ENCODE measurements at regions of chr3 and their contacts with region 1.

Region 1: GRCh38 chr3:187679638-187680396 is 9.6 kb upstream of the SST start:
- DNase-seq: peak; percentile 57 to 71 (median 61)
- H3K4me3 ChIP-seq: no peak overlapping the region
- H3K27ac ChIP-seq: no peak overlapping the region
- H3K4me1 ChIP-seq: no peaks in the 10 kb centered on the region
- H3K27me3 ChIP-seq: peaks cover 2 to 10% (median 4%) of the 10 kb centered on the region in 5 experiments

Region 2: DNA sequence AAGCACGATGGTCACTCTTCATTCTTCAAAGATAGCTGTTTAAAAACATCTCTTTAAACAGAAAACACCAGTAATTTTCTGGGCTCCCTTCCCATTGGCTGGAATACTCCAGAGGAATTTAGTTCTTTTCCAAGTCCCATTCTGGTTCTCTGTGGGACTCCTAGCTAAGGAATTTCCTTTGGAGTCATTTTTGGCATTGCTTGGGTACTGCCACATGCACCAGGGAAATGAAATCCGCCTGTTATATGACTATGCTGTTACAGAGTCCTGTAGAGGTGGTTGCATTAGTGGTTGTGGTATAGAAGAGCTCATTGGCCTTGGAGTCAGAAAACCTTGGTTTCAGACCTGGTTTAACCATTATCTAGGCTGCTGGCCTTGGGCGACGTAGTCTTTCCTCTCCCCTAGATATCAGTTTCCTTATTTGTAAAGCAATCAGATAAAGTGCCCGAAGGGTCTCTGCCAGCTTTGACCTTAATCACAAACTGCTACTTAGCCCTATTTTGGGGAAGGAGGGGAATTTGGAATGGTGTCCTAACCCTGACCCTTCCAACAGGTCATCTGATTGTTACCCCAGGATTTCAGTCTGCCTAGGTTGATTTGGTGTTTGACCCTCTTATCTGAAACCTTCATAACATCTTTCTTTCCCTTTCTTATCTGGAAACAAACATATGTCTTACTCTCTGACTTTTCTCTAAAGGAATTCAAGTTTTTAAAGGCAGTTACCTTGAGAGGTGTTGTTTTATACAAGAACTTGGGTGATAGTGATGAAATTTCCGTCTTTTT is 469.1 kb before region 1 on chr3:
- CTCF ChIA-PET with region 1: interaction called, 11 read pairs
- POLR2A ChIA-PET with region 1: no interaction called
- DNase-seq: peak in 1 of 3 donors; percentile 17
- H3K4me3 ChIP-seq: no peak overlapping the region
- H3K27ac ChIP-seq: no peak overlapping the region
- H3K4me1 ChIP-seq: no peaks in the 10 kb centered on the region
- H3K27me3 ChIP-seq: peaks cover 0 to 2% (median 0%) of the 10 kb centered on the region in 5 experiments

Region 3: DNA sequence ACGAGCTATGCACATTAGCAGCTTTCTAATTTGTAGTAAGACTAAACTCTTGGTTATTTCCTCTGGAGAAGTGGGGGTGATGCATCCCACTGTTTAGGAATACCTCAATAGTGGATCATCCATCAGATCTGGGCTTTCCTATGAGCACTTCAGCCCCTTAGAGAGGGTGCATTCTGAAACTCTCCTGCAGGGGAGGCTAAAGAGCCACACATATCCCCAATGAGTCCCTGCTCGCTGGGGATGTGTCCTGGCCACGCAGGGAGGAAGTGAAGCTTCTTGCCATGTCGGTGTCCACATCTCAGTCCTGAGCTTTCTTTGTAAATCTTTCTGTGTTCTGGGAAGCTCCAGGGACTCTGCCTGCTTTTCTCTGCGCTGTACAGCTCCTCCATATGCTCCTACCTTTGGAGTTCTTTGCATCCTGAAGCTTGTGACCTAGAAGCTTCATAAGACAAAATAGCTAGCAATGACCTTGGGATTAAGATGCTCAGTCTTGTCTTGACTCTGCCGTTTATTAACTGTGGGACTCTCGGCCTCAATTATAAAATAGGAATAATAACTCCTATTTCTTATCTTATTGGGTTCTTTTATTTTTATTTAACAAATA is 360.0 kb before region 1 on chr3:
- CTCF ChIA-PET with region 1: interaction called, 376 read pairs
- POLR2A ChIA-PET with region 1: no interaction called
- DNase-seq: peak; percentile 66 to 84 (median 76)
- H3K4me3 ChIP-seq: no peak overlapping the region
- H3K27ac ChIP-seq: no peak overlapping the region
- H3K4me1 ChIP-seq: peaks cover 0 to 7% (median 3%) of the 10 kb centered on the region in 4 experiments
- H3K27me3 ChIP-seq: peaks cover 2 to 10% (median 8%) of the 10 kb centered on the region in 5 experiments

Region 4: GRCh38 chr3:187567661-187568121 is 112.1 kb before region 1 on chr3:
- CTCF ChIA-PET with region 1: no interaction called
- POLR2A ChIA-PET with region 1: no interaction called
- DNase-seq: peak in 2 of 3 donors; percentile 14 to 63
- H3K4me3 ChIP-seq: no peak overlapping the region
- H3K27ac ChIP-seq: no peak overlapping the region
- H3K4me1 ChIP-seq: peaks cover 0 to 6% (median 0%) of the 10 kb centered on the region in 4 experiments
- H3K27me3 ChIP-seq: peaks cover 0 to 4% (median 0%) of the 10 kb centered on the region in 5 experiments

Region 5: GRCh38 chr3:187616307-187616972 is 63.4 kb before region 1 on chr3:
- CTCF ChIA-PET with region 1: interaction called, 15 read pairs
- POLR2A ChIA-PET with region 1: no interaction called
- DNase-seq: peak; percentile 55 to 82 (median 78)
- H3K4me3 ChIP-seq: no peak overlapping the region
- H3K27ac ChIP-seq: no peak overlapping the region
- H3K4me1 ChIP-seq: no peaks in the 10 kb centered on the region
- H3K27me3 ChIP-seq: peaks cover 0 to 2% (median 0%) of the 10 kb centered on the region in 5 experiments

Region 6: GRCh38 chr3:187689984-187690383 is 10.2 kb after region 1 on chr3:
- CTCF ChIA-PET with region 1: interaction called, 15 read pairs
- POLR2A ChIA-PET with region 1: no interaction called
- DNase-seq: no peak
- H3K4me3 ChIP-seq: no peak overlapping the region
- H3K27ac ChIP-seq: no peak overlapping the region
- H3K4me1 ChIP-seq: no peaks in the 10 kb centered on the region
- H3K27me3 ChIP-seq: peaks cover 0 to 4% (median 3%) of the 10 kb centered on the region in 5 experiments

Region 7: DNA sequence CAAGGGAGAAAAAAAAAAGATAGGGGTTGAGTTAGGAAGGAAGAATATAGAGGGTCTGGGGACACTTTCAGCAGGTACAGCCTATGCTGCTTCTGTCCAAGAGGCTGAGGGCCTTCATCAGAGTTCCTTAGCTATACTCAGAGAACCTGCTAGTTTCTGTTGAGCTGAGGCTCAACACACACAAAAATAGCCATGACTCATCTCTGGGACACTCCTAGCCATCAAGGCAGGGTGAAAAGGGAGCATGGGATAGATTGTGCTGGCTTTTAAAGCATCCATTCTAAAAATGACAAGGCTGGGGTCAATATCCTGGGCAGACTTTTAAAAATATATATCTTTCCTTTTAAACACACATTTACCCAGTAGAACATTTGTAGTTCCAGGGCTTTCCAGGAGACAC is 25.3 kb after region 1 on chr3:
- CTCF ChIA-PET with region 1: interaction called, 24 read pairs
- POLR2A ChIA-PET with region 1: no interaction called
- DNase-seq: no peak
- H3K4me3 ChIP-seq: no peak overlapping the region
- H3K27ac ChIP-seq: no peak overlapping the region
- H3K4me1 ChIP-seq: no peaks in the 10 kb centered on the region
- H3K27me3 ChIP-seq: peaks cover 0 to 2% (median 0%) of the 10 kb centered on the region in 5 experiments

Region 8: GRCh38 chr3:187714404-187714979 is 34.7 kb after region 1 on chr3:
- CTCF ChIA-PET with region 1: interaction called, 18 read pairs
- POLR2A ChIA-PET with region 1: interaction called, 3 read pairs
- DNase-seq: peak; percentile 67 to 86 (median 78)
- H3K4me3 ChIP-seq: no peak overlapping the region
- H3K27ac ChIP-seq: no peak overlapping the region
- H3K4me1 ChIP-seq: no peaks in the 10 kb centered on the region
- H3K27me3 ChIP-seq: no peaks in the 10 kb centered on the region

Measured in common myeloid progenitor, CD34-positive (primary cell).